ENCODE measurements at regions of chr17 and their contacts with region 1.

Region 1: GRCh38 chr17:42183741-42184711 is 1.2 kb downstream of the HCRT start:
- DNase-seq: peak; percentile 91
- ATAC-seq: peak; percentile 69
- H3K4me3 ChIP-seq: peak overlapping the region; percentile 64 to 81 (median 74)
- H3K4me3 Mint-ChIP-seq: peak overlapping the region; percentile 93
- H3K27ac ChIP-seq: peak overlapping the region; percentile 90 to 95
- H3K27ac Mint-ChIP-seq: peak overlapping the region; percentile 93
- H3K4me1 ChIP-seq: peaks cover 37 to 49% of the 10 kb centered on the region in 2 donors
- H3K4me1 Mint-ChIP-seq: peaks cover 49% of the 10 kb centered on the region
- H3K27me3 ChIP-seq: peaks cover 0 to 17% (median 2%) of the 10 kb centered on the region in 4 experiments
- H3K27me3 Mint-ChIP-seq: no peaks in the 10 kb centered on the region
- CTCF ChIP-seq: peak; percentile 90

Region 2: GRCh38 chr17:42019509-42020404 is 164.3 kb before region 1 on chr17 and contains the start of gene NKIRAS2:
- CTCF ChIA-PET with region 1: interaction called, 12 read pairs
- POLR2A ChIA-PET with region 1: no interaction called
- intact Hi-C with region 1: no loop called
- DNase-seq: peak; percentile 93
- ATAC-seq: peak; percentile 77
- H3K4me3 ChIP-seq: peak within 1 kb of the TSS; percentile 65 to 87 (median 73)
- H3K4me3 Mint-ChIP-seq: peak within 1 kb of the TSS; percentile 100
- H3K27ac ChIP-seq: peak within 1 kb of the TSS; percentile 28 to 78
- H3K27ac Mint-ChIP-seq: peak within 1 kb of the TSS; percentile 83
- H3K4me1 ChIP-seq: peaks cover 46 to 53% of the 10 kb centered on the region in 2 donors
- H3K4me1 Mint-ChIP-seq: peaks cover 64% of the 10 kb centered on the region
- H3K27me3 ChIP-seq: no peaks in the 10 kb centered on the region
- H3K27me3 Mint-ChIP-seq: no peaks in the 10 kb centered on the region
- CTCF ChIP-seq: peak; percentile 89
- total RNA-seq, gene NKIRAS2: 22.0 and 23.7 TPM in 2 replicates

Region 3: DNA sequence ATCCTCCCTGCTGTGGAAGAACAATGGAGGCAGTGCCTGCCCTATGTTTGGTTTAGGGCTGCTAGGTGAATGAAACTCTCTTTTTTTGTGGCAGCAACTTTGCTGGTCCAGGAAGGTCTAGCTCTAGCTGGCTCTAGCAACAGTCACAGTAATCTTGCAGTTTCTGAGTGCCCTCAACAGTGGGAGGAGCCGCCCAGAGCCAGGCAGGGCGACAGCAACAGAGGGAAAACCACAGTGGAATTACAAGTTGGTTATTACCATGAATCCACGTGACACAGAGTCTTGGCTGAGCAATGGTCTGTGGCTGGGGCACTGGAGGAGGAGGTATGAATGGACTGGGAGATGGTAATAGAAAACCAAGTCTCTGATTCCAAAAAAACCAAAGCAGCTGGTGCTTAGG is 51.1 kb before region 1 on chr17:
- CTCF ChIA-PET with region 1: interaction called, 5 read pairs
- POLR2A ChIA-PET with region 1: no interaction called
- intact Hi-C with region 1: loop called (anchors 1 kb)
- DNase-seq: no peak
- ATAC-seq: peak; percentile 48
- H3K4me3 ChIP-seq: peak overlapping the region in 3 of 5 experiments; percentile 15 to 29 (median 15)
- H3K4me3 Mint-ChIP-seq: peak overlapping the region; percentile 54
- H3K27ac ChIP-seq: peak overlapping the region; percentile 65 to 75
- H3K27ac Mint-ChIP-seq: peak overlapping the region; percentile 93
- H3K4me1 ChIP-seq: peaks cover 58 to 64% of the 10 kb centered on the region in 2 donors
- H3K4me1 Mint-ChIP-seq: peaks cover 57% of the 10 kb centered on the region
- H3K27me3 ChIP-seq: no peaks in the 10 kb centered on the region
- H3K27me3 Mint-ChIP-seq: no peaks in the 10 kb centered on the region
- CTCF ChIP-seq: no peak

Region 4: DNA sequence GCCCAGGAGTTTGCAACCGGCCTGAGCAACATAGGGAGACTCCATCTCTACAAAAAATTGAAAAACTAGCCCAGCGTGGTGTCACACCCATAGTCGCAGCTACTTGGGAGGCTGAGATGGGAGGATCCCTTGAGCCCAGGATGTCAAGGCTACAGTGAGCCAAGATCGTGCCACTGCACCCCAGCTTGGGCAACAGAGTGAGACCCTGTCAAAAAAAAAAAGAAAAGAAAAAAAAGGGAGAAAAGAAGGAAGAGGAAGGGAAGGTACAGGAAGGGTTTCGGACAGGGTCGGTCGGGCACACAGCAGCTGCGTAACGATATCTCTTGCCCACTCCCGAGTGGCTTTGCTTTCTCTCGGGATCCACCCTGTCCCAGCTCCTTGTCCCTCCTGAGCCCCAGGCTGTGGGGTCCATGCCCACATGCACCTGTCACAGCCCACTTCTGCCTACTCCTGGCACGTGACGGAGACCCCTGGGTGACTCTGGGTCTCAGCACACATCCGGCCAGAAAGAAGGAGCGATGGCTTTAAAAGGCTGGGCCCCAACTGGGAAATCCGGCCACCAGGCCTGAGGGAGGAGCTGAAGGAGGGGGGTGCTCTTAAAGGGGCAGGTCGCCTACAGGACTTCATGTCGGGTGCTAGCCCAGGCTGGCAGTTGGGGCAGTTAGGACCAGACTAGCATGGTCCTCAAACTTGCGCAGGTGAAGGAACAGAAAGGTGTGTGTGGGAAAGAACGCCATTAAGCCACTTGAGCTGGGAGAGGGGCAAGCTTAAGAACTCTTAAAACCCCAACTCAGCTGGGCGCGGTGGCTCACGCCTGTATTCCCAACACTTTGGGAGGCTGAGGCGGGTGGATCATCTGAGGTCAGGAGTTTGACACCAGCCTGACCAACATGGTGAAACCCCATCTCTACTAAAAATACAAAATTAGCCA is 10.2 kb after region 1 on chr17 and contains the start of gene GHDC:
- CTCF ChIA-PET with region 1: interaction called, 20 read pairs
- POLR2A ChIA-PET with region 1: interaction called, 11 read pairs
- intact Hi-C with region 1: loop called (anchors 1 kb)
- DNase-seq: peak; percentile 86
- ATAC-seq: peak; percentile 88
- H3K4me3 ChIP-seq: peak within 1 kb of the TSS; percentile 79 to 99 (median 88)
- H3K4me3 Mint-ChIP-seq: peak within 1 kb of the TSS; percentile 99
- H3K27ac ChIP-seq: peak within 1 kb of the TSS; percentile 64 to 79
- H3K27ac Mint-ChIP-seq: peak within 1 kb of the TSS; percentile 94
- H3K4me1 ChIP-seq: peaks cover 24 to 35% of the 10 kb centered on the region in 2 donors
- H3K4me1 Mint-ChIP-seq: peaks cover 38% of the 10 kb centered on the region
- H3K27me3 ChIP-seq: no peaks in the 10 kb centered on the region
- H3K27me3 Mint-ChIP-seq: no peaks in the 10 kb centered on the region
- CTCF ChIP-seq: no peak
- total RNA-seq, gene GHDC: 41.5 and 41.9 TPM in 2 replicates

Region 5: GRCh38 chr17:42312285-42313130 is 128.5 kb after region 1 on chr17:
- CTCF ChIA-PET with region 1: interaction called, 3 read pairs
- POLR2A ChIA-PET with region 1: no interaction called
- intact Hi-C with region 1: loop called (anchors 1 kb)
- DNase-seq: peak; percentile 87
- ATAC-seq: peak; percentile 72
- H3K4me3 ChIP-seq: peak overlapping the region in 4 of 5 experiments; percentile 29 to 64 (median 44)
- H3K4me3 Mint-ChIP-seq: peak overlapping the region; percentile 66
- H3K27ac ChIP-seq: no peak overlapping the region
- H3K27ac Mint-ChIP-seq: no peak overlapping the region
- H3K4me1 ChIP-seq: peaks cover 44 to 52% of the 10 kb centered on the region in 2 donors
- H3K4me1 Mint-ChIP-seq: peaks cover 51% of the 10 kb centered on the region
- H3K27me3 ChIP-seq: no peaks in the 10 kb centered on the region
- H3K27me3 Mint-ChIP-seq: no peaks in the 10 kb centered on the region
- CTCF ChIP-seq: peak; percentile 76

Region 6: DNA sequence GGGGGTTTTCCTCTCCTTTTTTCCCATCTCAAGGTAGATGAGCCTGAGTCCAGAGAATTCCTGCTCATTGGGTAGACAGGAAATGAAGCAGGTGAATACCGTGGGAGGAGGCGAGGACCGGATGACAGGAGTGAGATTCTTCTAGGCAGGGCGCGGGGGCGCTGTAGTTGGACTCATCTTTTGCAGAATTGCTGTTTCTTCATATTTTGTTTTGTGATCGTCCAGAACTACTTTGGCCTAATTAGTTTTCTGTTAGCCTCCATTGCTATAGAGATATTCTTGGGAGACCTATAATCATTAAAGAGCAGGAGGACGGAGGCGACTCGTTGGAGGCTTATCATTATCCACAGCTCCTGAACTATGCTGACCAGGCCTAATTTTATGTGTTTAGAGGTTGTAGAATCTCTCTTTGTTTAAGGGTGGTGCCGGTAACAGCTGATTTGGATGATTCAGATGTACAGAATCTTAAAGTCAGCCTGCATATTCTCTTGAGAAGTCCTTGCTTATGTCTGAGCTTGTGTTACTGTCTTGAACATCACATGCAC is 275.3 kb after region 1 on chr17:
- CTCF ChIA-PET with region 1: no interaction called
- POLR2A ChIA-PET with region 1: no interaction called
- intact Hi-C with region 1: loop called (anchors 5 kb)
- DNase-seq: peak; percentile 44
- ATAC-seq: no peak
- H3K4me3 ChIP-seq: peak overlapping the region; percentile 67 to 97 (median 95)
- H3K4me3 Mint-ChIP-seq: peak overlapping the region; percentile 97
- H3K27ac ChIP-seq: peak overlapping the region; percentile 78 to 84
- H3K27ac Mint-ChIP-seq: peak overlapping the region; percentile 93
- H3K4me1 ChIP-seq: peaks cover 52 to 61% of the 10 kb centered on the region in 2 donors
- H3K4me1 Mint-ChIP-seq: peaks cover 59% of the 10 kb centered on the region
- H3K27me3 ChIP-seq: no peaks in the 10 kb centered on the region
- H3K27me3 Mint-ChIP-seq: no peaks in the 10 kb centered on the region
- CTCF ChIP-seq: peak; percentile 6

Measured in B cell (primary cell).